Activated naive CD4-positive, alpha-beta T cell treated with anti-CD3 and anti-CD28 coated beads, Interleukin-2, amount 10 ng/mL, durations not matched to agents 7 days and 5 days (primary cell): ENCODE measurements at regions of chr14 and their contacts with region 1.

Region 1: DNA sequence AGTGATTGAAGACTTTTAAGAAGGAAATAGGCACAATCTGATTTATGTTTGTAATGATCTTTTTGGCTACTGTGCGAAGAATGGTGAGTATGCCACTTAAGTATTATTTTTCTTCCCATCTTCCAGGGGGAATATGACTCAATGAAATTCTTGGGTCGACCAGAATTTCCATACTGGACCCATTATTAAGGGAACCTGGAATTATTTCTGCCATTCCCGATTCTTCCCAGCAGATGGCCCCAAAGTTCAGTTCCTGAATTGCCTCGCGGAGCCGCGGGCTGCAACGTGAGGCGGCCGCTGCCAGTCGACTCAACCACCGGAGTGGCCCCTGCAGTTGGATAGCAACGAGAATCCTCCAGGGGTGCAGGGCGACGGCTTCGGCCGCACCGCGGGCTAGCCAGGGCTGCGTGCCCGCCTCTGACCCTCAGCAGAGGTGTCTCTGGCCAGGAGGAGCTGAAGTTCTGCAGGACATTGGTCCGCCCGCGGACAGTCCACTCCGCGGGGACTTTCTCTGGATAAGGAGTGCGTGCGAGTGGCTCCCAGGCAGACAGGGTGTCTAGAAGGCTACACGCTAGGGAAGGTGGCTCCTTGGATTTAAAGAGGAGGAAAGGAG is 628 bp upstream of the TSHR start:
- DNase-seq: peak; percentile 83
- H3K4me3 Mint-ChIP-seq: peak overlapping the region; percentile 90
- H3K27ac Mint-ChIP-seq: peak overlapping the region; percentile 93
- H3K4me1 Mint-ChIP-seq: peaks cover 52% of the 10 kb centered on the region
- H3K27me3 Mint-ChIP-seq: peaks cover 15% of the 10 kb centered on the region

Region 2: GRCh38 chr14:80973931-80974641 is 19.3 kb after region 1 on chr14:
- CTCF ChIA-PET with region 1: interaction called, 12 read pairs
- DNase-seq: no peak
- H3K4me3 Mint-ChIP-seq: no peak overlapping the region
- H3K27ac Mint-ChIP-seq: no peak overlapping the region
- H3K4me1 Mint-ChIP-seq: peaks cover 45% of the 10 kb centered on the region
- H3K27me3 Mint-ChIP-seq: peaks cover 11% of the 10 kb centered on the region

Region 3: DNA sequence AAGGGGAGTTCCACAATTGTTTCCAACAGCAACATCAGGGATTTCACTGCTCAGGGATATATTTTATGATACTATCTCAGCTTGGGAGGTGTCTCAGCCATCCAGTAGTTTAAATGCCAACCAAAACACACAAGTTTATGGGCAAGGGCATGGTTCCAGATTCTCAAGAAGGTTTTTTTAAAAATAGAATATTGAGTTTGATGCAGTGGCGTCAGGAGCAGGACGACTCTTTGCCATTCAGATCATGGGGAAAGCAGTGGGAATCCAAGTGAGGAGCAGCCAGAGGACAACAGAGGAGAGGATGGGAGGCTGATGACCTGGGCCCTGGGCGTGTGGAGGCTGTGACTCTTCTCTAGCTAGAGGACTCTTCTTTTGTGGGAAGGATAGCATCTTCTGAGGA is 26.4 kb after region 1 on chr14:
- CTCF ChIA-PET with region 1: interaction called, 115 read pairs
- DNase-seq: no peak
- H3K4me3 Mint-ChIP-seq: no peak overlapping the region
- H3K27ac Mint-ChIP-seq: no peak overlapping the region
- H3K4me1 Mint-ChIP-seq: peaks cover 51% of the 10 kb centered on the region
- H3K27me3 Mint-ChIP-seq: peaks cover 6% of the 10 kb centered on the region

Region 4: GRCh38 chr14:80987235-80988032 is 32.6 kb after region 1 on chr14:
- CTCF ChIA-PET with region 1: interaction called, 115 read pairs
- DNase-seq: peak; percentile 79
- H3K4me3 Mint-ChIP-seq: no peak overlapping the region
- H3K27ac Mint-ChIP-seq: no peak overlapping the region
- H3K4me1 Mint-ChIP-seq: peaks cover 14% of the 10 kb centered on the region
- H3K27me3 Mint-ChIP-seq: peaks cover under 1% of the 10 kb centered on the region

Region 5: DNA sequence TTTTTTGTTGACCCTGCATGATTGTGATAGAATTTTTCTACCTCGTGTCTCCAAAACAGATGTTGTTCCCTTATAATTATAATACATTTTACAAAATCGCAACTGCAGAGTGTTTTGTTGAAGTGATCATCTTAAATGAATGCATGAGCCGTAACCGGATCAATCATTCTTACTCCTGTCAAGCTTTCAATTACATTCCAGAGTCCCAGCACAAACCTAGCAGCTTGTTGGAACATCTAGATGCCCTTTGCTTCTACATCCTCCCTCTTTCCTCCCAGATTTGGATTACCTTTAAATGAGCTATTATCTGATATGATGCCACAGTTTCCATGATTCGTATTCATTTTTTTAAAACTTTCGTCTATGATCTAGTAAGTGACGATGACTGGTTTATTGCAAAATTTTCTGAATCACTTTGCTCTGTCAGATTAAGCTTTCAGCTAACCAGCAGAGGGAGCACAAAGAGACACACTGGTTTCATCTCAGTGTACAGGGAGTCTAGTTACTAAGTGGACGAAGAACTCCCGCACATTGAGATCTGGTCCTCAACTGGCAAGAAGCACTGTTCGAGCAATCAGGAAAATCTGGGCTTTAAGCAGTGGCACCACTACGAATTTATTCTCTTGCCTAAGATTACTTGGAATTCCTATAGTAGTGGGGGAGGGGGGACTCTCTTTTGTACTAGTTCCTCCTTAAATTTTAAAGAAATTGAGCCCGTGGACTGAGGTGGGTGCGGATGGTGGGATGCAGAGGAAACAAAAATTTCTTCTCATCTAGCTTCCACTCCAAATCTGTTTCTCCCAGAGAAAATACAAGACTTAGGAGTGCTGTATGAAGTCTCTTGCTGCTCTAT is 41.5 kb after region 1 on chr14:
- CTCF ChIA-PET with region 1: interaction called, 10 read pairs
- DNase-seq: peak; percentile 38
- H3K4me3 Mint-ChIP-seq: no peak overlapping the region
- H3K27ac Mint-ChIP-seq: no peak overlapping the region
- H3K4me1 Mint-ChIP-seq: peaks cover 6% of the 10 kb centered on the region
- H3K27me3 Mint-ChIP-seq: peaks cover 18% of the 10 kb centered on the region

Region 6: GRCh38 chr14:81085596-81085995 is 130.8 kb after region 1 on chr14:
- CTCF ChIA-PET with region 1: no interaction called
- DNase-seq: no peak
- H3K4me3 Mint-ChIP-seq: no peak overlapping the region
- H3K27ac Mint-ChIP-seq: no peak overlapping the region
- H3K4me1 Mint-ChIP-seq: no peaks in the 10 kb centered on the region
- H3K27me3 Mint-ChIP-seq: no peaks in the 10 kb centered on the region